ENCODE measurements at regions of chr16 and their contacts with region 1.

Region 1: GRCh38 chr16:70770626-70771552 is 30.1 kb downstream of the VAC14 start:
- DNase-seq: peak; percentile 73
- ATAC-seq: peak; percentile 97
- H3K4me3 Mint-ChIP-seq: no peak overlapping the region
- H3K27ac Mint-ChIP-seq: no peak overlapping the region
- H3K4me1 Mint-ChIP-seq: no peaks in the 10 kb centered on the region
- H3K27me3 Mint-ChIP-seq: no peaks in the 10 kb centered on the region
- CTCF ChIP-seq: peak; percentile 97

Region 2: GRCh38 chr16:70679666-70680494 is 91.0 kb before region 1 on chr16:
- CTCF ChIA-PET with region 1: interaction called, 94 read pairs
- POLR2A ChIA-PET with region 1: no interaction called
- intact Hi-C with region 1: loop called (anchors 5 kb)
- DNase-seq: no peak
- ATAC-seq: peak; percentile 46
- H3K4me3 Mint-ChIP-seq: no peak overlapping the region
- H3K27ac Mint-ChIP-seq: no peak overlapping the region
- H3K4me1 Mint-ChIP-seq: peaks cover 9% of the 10 kb centered on the region
- H3K27me3 Mint-ChIP-seq: no peaks in the 10 kb centered on the region
- CTCF ChIP-seq: peak; percentile 35

Region 3: GRCh38 chr16:70730031-70730430 is 40.9 kb before region 1 on chr16:
- CTCF ChIA-PET with region 1: interaction called, 17 read pairs
- POLR2A ChIA-PET with region 1: no interaction called
- intact Hi-C with region 1: no loop called
- DNase-seq: no peak
- ATAC-seq: no peak
- H3K4me3 Mint-ChIP-seq: no peak overlapping the region
- H3K27ac Mint-ChIP-seq: no peak overlapping the region
- H3K4me1 Mint-ChIP-seq: peaks cover 5% of the 10 kb centered on the region
- H3K27me3 Mint-ChIP-seq: no peaks in the 10 kb centered on the region
- CTCF ChIP-seq: no peak

Region 4: DNA sequence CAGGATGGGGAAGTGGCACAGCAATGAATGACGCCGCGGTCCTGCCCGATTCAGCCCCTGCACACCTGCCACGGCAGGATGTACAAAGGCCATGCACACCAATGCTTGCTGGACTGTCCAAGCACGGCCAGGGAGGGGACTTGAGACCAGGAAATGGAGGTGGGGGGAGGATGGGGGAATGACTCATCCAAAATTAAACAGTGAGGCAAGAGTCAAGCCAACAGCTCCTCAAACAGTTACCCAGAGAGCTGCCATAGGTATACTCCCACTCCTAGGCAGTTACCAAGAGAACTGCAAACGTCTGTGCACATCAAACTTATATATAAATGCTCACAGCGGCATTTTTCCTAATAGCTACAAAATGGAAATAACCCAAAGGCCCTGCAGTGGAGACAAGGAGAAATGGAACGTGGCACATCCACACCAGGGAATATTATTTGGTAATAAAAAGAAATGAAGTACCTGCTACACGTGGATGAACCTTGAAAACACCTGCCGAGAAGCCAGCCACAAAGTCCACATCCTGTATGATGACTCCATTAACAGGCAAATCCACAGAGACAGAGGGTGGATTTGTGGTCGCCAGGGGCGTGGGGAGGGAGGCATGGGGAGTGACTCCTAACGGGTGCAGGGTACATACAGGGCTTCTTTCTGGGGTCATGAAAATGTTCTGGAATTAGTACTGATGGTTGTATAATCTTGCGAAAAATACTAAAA is 24.0 kb before region 1 on chr16:
- CTCF ChIA-PET with region 1: interaction called, 18 read pairs
- POLR2A ChIA-PET with region 1: interaction called, 3 read pairs
- intact Hi-C with region 1: no loop called
- DNase-seq: peak; percentile 62
- ATAC-seq: peak; percentile 67
- H3K4me3 Mint-ChIP-seq: no peak overlapping the region
- H3K27ac Mint-ChIP-seq: peak overlapping the region; percentile 72
- H3K4me1 Mint-ChIP-seq: peaks cover 30% of the 10 kb centered on the region
- H3K27me3 Mint-ChIP-seq: no peaks in the 10 kb centered on the region
- CTCF ChIP-seq: no peak

Region 5: DNA sequence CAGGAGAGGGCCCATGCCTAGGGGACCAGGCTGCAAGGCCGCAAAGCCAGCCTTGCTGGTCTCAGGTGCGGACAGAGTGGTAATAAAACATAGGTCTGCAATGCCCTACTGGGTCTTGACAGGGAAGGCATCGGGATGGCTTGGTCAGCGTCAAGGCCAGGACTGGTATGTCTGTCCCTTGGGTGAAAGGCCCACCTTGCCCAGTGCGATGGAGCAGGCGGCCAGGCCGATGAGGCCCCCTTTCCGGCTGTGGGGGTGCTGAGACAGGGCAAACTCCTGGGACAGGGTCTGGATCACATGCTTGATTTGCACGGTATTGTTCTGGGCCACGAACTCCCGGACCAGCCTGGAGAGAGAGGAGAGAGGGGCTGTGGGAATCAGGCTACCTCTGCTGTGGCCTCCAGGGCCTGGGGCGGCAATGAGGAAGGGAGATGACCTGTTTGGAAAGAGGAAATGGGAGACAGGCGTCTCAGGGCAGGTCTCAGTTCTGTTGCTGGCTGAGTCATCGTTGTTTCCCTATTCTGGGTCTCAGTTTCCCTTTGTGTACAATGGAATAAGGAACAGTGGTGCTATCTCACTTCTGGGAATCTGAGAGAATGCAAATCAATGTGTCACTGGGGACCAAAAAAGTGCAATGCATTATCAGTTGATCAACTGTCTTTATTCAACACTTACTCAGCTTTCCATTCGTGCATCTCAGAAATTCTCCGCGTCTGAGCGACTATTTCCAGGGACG is 15.3 kb after region 1 on chr16:
- CTCF ChIA-PET with region 1: interaction called, 18 read pairs
- POLR2A ChIA-PET with region 1: interaction called, 4 read pairs
- intact Hi-C with region 1: no loop called
- DNase-seq: no peak
- ATAC-seq: no peak
- H3K4me3 Mint-ChIP-seq: no peak overlapping the region
- H3K27ac Mint-ChIP-seq: no peak overlapping the region
- H3K4me1 Mint-ChIP-seq: no peaks in the 10 kb centered on the region
- H3K27me3 Mint-ChIP-seq: no peaks in the 10 kb centered on the region
- CTCF ChIP-seq: no peak